Right ventricle myocardium inferior (tissue), 1 donor: ENCODE measurements at regions of chr1 and their contacts with region 1.

Region 1: GRCh38 chr1:156860113-156860627 is 495 bp upstream of the NTRK1 start:
- DNase-seq: peak; percentile 61
- ATAC-seq: peak; percentile 76

Region 2: GRCh38 chr1:156797212-156797871 is 62.8 kb before region 1 on chr1:
- intact Hi-C with region 1: loop called (anchors 2 kb)
- DNase-seq: no peak
- ATAC-seq: no peak

Region 3: GRCh38 chr1:156838981-156839410 is 21.2 kb before region 1 on chr1:
- intact Hi-C with region 1: loop called (anchors 1 kb)
- DNase-seq: no peak
- ATAC-seq: no peak